ENCODE measurements at regions of chr9 and their contacts with region 1.

Region 1: DNA sequence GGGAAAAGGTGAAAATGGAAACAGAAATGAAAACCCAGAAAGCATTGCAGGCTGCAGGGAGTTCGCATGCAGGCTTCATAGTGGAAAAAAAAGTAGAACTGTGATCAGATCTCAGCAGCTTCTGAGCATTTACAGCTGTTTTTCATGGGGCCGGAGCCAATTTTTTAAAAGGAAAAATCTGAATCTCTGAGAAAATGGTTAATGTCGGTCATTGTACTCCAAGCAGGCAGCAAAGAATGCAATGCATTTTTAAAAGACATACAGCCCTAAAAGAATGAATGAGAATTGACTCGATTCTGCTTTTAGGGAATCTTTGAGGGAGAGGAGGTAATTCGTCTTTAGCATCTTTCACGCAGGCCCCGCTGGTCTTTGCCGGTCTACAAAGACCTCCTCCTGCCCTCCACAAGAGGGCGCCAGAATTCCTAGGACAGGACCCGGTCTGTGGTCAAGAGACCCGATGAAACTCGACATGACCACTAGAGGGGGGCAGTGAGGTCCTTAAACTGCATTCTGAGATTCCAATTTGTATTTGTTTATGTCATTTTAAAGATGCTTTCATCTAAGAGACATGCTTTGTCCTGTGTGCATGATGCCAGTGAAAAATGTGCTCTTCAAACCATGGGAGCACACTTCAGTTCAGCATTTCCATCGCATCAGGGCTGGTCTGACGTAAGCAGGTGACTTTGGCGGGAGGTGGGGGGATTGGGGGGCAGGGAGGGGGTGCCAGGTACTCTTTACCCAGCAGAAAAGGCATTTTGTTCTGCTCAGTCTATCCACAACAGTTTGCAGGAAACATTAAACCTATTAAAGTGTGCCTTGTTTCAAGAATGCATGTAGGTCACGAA is 43.7 kb upstream of the TMEM252 start:
- DNase-seq: peak; percentile 81 to 92 (median 88)
- ATAC-seq: peak; percentile 98
- H3K4me3 ChIP-seq: no peak overlapping the region
- H3K27ac ChIP-seq: no peak overlapping the region
- H3K4me1 ChIP-seq: no peaks in the 10 kb centered on the region; a peak in 1 of 5 replicates
- H3K27me3 ChIP-seq: no peaks in the 10 kb centered on the region; a peak in 1 of 5 replicates
- CTCF ChIP-seq: peak; percentile 98 to 100 (median 100)
- EP300 ChIP-seq: no peak
- POLR2A ChIP-seq: no peak
- RAD21 ChIP-seq: peak; percentile 96 to 98

Region 2: GRCh38 chr9:68595868-68596267 is 11.5 kb after region 1 on chr9:
- CTCF ChIA-PET with region 1: no interaction called
- POLR2A ChIA-PET with region 1: no interaction called
- in situ Hi-C with region 1: no loop called
- intact Hi-C with region 1: no loop called
- DNase-seq: no peak
- ATAC-seq: no peak
- H3K4me3 ChIP-seq: no peak overlapping the region
- H3K27ac ChIP-seq: no peak overlapping the region
- H3K4me1 ChIP-seq: no peaks in the 10 kb centered on the region; a peak in 1 of 5 replicates
- H3K27me3 ChIP-seq: peaks cover 0 to 3% of the 10 kb centered on the region in 2 experiments; a peak in 1 of 5 replicates
- CTCF ChIP-seq: no peak
- EP300 ChIP-seq: no peak
- POLR2A ChIP-seq: no peak
- RAD21 ChIP-seq: no peak

Region 3: DNA sequence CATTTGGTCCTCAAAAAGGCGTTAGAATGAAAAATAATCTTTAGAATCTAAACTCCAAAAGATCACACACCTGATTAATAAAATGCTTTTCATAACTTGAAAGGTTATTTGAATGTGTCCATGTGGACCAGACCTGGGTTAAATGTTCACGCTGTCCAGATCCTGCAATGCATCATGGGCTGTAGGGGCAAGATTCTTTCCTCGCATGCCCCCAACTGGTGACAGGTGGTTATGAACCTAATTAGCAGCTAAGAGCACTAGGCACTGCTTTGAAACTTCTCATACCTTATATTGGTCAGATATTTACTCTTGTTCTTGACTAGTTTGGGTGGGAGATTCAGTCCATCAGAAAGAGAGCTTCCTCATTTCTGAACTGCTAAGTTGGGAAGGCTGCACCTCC is 101.4 kb after region 1 on chr9:
- CTCF ChIA-PET with region 1: interaction called, 8 read pairs
- POLR2A ChIA-PET with region 1: no interaction called
- in situ Hi-C with region 1: loop called (anchors 5 kb)
- intact Hi-C with region 1: loop called (anchors 1 kb)
- DNase-seq: peak; percentile 67 to 69 (median 68)
- ATAC-seq: peak; percentile 99
- H3K4me3 ChIP-seq: no peak overlapping the region
- H3K27ac ChIP-seq: no peak overlapping the region
- H3K4me1 ChIP-seq: peaks cover 0 to 5% of the 10 kb centered on the region in 2 experiments; a peak in 2 of 5 replicates
- H3K27me3 ChIP-seq: no peaks in the 10 kb centered on the region
- CTCF ChIP-seq: peak; percentile 72 to 78 (median 73)
- EP300 ChIP-seq: no peak
- POLR2A ChIP-seq: no peak
- RAD21 ChIP-seq: peak; percentile 68 to 78

Region 4: DNA sequence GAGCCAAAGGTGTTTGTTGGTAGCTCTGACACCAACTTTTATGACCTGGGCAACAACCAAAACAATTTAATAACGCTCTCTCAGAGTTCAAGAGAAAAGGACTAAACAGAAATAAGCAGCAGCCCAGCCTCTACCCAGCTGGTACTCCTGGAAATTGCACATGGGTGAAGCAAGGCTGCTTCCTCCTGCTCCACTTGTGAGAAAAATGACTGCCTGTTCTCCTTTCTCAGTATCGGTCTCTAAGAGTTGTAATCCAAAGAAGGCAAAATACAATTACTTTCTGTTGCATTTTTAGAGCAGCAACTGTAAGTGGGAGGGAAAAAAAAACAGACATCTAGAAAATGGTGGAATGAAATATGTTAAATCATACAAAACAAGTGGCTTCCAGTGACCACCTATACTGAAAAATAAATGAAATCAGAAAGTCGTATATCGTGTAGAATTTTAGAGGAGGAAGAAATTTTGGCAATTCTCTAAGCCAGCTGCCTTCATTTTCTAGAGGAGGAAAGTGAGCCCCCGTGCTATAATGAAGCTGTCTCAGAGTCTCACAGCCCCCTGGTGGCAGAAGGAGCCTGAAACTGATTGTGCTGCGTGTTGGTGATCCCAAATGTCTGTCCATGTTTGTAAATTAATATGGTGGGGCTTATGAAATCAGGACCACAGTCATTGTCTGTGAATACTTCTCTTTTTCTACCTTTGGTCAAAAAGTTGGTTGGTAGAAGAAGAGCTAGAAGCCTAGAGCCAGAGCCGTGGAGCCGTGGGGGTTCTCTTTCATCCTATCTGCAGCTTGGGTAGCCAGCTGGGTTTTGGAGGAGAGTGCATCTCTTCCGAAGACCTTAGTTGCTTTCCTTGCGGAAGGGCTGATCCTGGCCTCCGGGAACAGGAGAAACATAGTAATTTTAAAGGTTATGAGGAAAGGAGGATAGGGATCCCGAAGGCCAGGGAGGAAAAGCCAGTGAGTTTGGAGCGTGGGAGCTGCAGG is 260.5 kb after region 1 on chr9:
- CTCF ChIA-PET with region 1: interaction called, 23 read pairs
- POLR2A ChIA-PET with region 1: no interaction called
- in situ Hi-C with region 1: loop called (anchors 5 kb)
- intact Hi-C with region 1: loop called (anchors 5 kb)
- DNase-seq: peak; percentile 33 to 75 (median 43)
- ATAC-seq: peak; percentile 95
- H3K4me3 ChIP-seq: no peak overlapping the region
- H3K27ac ChIP-seq: no peak overlapping the region
- H3K4me1 ChIP-seq: no peaks in the 10 kb centered on the region; a peak in 1 of 5 replicates
- H3K27me3 ChIP-seq: no peaks in the 10 kb centered on the region
- CTCF ChIP-seq: peak; percentile 68 to 75 (median 71)
- EP300 ChIP-seq: no peak
- POLR2A ChIP-seq: no peak
- RAD21 ChIP-seq: peak; percentile 63 to 83

Region 5: GRCh38 chr9:68949271-68950000 is 365.0 kb after region 1 on chr9:
- CTCF ChIA-PET with region 1: interaction called, 4 read pairs
- POLR2A ChIA-PET with region 1: no interaction called
- in situ Hi-C with region 1: no loop called
- intact Hi-C with region 1: loop called (anchors 5 kb)
- DNase-seq: no peak
- ATAC-seq: no peak
- H3K4me3 ChIP-seq: no peak overlapping the region
- H3K27ac ChIP-seq: no peak overlapping the region
- H3K4me1 ChIP-seq: peaks cover 0 to 3% of the 10 kb centered on the region in 2 experiments; a peak in 2 of 5 replicates
- H3K27me3 ChIP-seq: no peaks in the 10 kb centered on the region
- CTCF ChIP-seq: peak in 1 of 3 experiments; percentile 11; a peak in 1 of 6 replicates
- EP300 ChIP-seq: no peak
- POLR2A ChIP-seq: no peak
- RAD21 ChIP-seq: no peak

Region 6: DNA sequence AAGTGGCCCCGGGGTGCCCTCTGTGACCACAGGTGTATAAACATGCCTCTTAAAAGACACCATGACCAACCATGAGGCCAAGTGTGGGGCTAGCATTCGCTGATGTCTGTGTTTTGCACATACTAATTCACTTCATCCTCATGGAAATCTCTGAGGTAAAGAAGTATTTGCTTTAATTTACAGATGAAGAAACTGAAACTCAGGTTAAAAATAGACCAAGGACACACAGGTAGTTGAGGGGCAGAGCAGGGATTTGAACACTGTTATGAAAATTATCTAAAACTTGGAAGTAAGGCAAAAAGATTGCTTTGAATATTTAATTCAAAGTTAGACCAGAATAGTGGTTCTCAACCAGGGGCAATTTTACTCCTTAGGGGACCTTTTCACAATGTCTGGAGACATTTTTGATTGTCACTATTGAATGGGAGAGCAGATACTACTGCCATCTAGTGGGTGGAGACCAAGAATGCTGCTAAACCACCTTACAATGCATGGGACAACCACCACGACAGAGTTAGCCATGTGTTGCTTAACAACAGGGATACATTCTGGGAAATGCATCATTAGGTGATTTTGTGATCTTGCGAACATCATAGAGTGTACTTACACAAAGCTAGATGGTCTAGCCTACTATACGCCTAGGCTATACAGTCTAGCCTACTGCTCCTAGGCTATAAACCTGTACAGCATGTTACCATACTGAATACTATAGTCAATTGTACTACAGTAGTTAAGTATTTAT is 443.1 kb after region 1 on chr9:
- CTCF ChIA-PET with region 1: interaction called, 21 read pairs
- POLR2A ChIA-PET with region 1: no interaction called
- in situ Hi-C with region 1: loop called (anchors 5 kb)
- intact Hi-C with region 1: loop called (anchors 1 kb)
- DNase-seq: peak; percentile 44 to 78 (median 58)
- ATAC-seq: peak; percentile 92
- H3K4me3 ChIP-seq: no peak overlapping the region
- H3K27ac ChIP-seq: no peak overlapping the region; the same call in 2 of the 3 replicates
- H3K4me1 ChIP-seq: peaks cover 13 to 25% of the 10 kb centered on the region in 2 experiments; a peak in 4 of 5 replicates
- H3K27me3 ChIP-seq: no peaks in the 10 kb centered on the region
- CTCF ChIP-seq: peak; percentile 66 to 77 (median 69)
- EP300 ChIP-seq: no peak
- POLR2A ChIP-seq: no peak
- RAD21 ChIP-seq: peak; percentile 58 to 80

Region 7: GRCh38 chr9:69186841-69187611 is 602.6 kb after region 1 on chr9:
- CTCF ChIA-PET with region 1: no interaction called
- POLR2A ChIA-PET with region 1: no interaction called
- in situ Hi-C with region 1: no loop called
- intact Hi-C with region 1: loop called (anchors 5 kb)
- DNase-seq: peak in 2 of 4 experiments; percentile 59 to 68
- ATAC-seq: peak; percentile 83
- H3K4me3 ChIP-seq: no peak overlapping the region
- H3K27ac ChIP-seq: peak overlapping the region; percentile 55
- H3K4me1 ChIP-seq: peaks cover 11 to 42% of the 10 kb centered on the region in 2 experiments
- H3K27me3 ChIP-seq: no peaks in the 10 kb centered on the region
- CTCF ChIP-seq: no peak
- EP300 ChIP-seq: peak; percentile 77
- POLR2A ChIP-seq: no peak
- RAD21 ChIP-seq: no peak